ENCODE measurements at regions of chr13 and their contacts with region 1.

Region 1: GRCh38 chr13:102596147-102597028 is at the start of gene TPP2:
- DNase-seq: peak; percentile 97 to 98 (median 97)
- H3K4me3 ChIP-seq: peak within 1 kb of the TSS; percentile 78 to 96
- H3K4me3 Mint-ChIP-seq: peak within 1 kb of the TSS; percentile 97 to 99 (median 98)
- H3K27ac ChIP-seq: peak within 1 kb of the TSS; percentile 93
- H3K27ac Mint-ChIP-seq: peak within 1 kb of the TSS; percentile 99 to 100 (median 100)
- H3K4me1 ChIP-seq: peaks cover 65% of the 10 kb centered on the region
- H3K4me1 Mint-ChIP-seq: peaks cover 53 to 83% (median 64%) of the 10 kb centered on the region in 4 donors
- H3K27me3 ChIP-seq: no peaks in the 10 kb centered on the region
- H3K27me3 Mint-ChIP-seq: no peaks in the 10 kb centered on the region
- total RNA-seq, gene TPP2: 117 TPM

Region 2: GRCh38 chr13:102495663-102496062 is 100.7 kb before region 1 on chr13:
- CTCF ChIA-PET with region 1: no interaction called
- POLR2A ChIA-PET with region 1: no interaction called
- intact Hi-C with region 1: no loop called
- DNase-seq: no peak
- H3K4me3 ChIP-seq: no peak overlapping the region
- H3K4me3 Mint-ChIP-seq: no peak overlapping the region
- H3K27ac ChIP-seq: no peak overlapping the region
- H3K27ac Mint-ChIP-seq: no peak overlapping the region
- H3K4me1 ChIP-seq: no peaks in the 10 kb centered on the region
- H3K4me1 Mint-ChIP-seq: no peaks in the 10 kb centered on the region
- H3K27me3 ChIP-seq: no peaks in the 10 kb centered on the region
- H3K27me3 Mint-ChIP-seq: peaks cover 5 to 11% of the 10 kb centered on the region in 2 donors

Region 3: DNA sequence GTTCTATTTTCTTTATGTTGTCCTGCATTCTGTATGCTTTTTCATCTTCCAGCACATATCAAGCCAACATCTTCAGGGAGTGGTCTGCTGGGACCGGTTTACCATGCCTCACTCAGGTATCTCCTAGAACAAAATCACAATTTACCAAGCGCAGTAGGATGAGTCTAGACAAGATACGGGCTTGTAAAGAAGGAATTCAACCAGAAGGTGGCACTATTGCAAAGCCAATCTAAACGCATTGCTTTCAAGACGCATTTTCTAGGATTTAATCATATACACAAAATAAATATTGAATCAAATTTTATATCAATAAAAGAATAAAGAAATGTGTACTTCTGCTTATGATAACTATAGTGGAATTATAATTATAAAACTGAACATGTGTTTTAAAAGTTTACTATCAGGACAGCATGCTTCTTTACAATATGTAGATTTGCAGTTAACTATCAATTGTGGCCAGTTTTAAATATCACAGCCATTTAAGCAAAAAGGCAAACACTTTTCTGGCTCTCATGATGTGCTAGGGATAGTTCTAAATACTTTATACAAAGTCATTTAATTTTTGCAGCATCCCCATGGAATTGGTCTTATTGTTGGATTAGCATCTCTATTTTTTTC is 15.7 kb before region 1 on chr13:
- CTCF ChIA-PET with region 1: interaction called, 62 read pairs
- POLR2A ChIA-PET with region 1: interaction called, 12 read pairs
- intact Hi-C with region 1: loop called (anchors 2 kb)
- DNase-seq: peak; percentile 57 to 67 (median 63)
- H3K4me3 ChIP-seq: no peak overlapping the region
- H3K4me3 Mint-ChIP-seq: no peak overlapping the region
- H3K27ac ChIP-seq: no peak overlapping the region
- H3K27ac Mint-ChIP-seq: peak overlapping the region in 1 of 7 donors; percentile 58
- H3K4me1 ChIP-seq: peaks cover 9% of the 10 kb centered on the region
- H3K4me1 Mint-ChIP-seq: peaks cover 5 to 14% (median 8%) of the 10 kb centered on the region in 4 donors
- H3K27me3 ChIP-seq: no peaks in the 10 kb centered on the region
- H3K27me3 Mint-ChIP-seq: peaks cover 6 to 8% of the 10 kb centered on the region in 2 donors

Region 4: GRCh38 chr13:102620516-102620915 is 24.1 kb after region 1 on chr13:
- CTCF ChIA-PET with region 1: interaction called, 10 read pairs
- POLR2A ChIA-PET with region 1: interaction called, 12 read pairs
- intact Hi-C with region 1: loop called (anchors 5 kb)
- DNase-seq: no peak
- H3K4me3 ChIP-seq: no peak overlapping the region
- H3K4me3 Mint-ChIP-seq: no peak overlapping the region
- H3K27ac ChIP-seq: no peak overlapping the region
- H3K27ac Mint-ChIP-seq: peak overlapping the region in 1 of 7 donors; percentile 80
- H3K4me1 ChIP-seq: no peaks in the 10 kb centered on the region
- H3K4me1 Mint-ChIP-seq: peaks cover 0 to 14% (median 5%) of the 10 kb centered on the region in 4 donors
- H3K27me3 ChIP-seq: no peaks in the 10 kb centered on the region
- H3K27me3 Mint-ChIP-seq: no peaks in the 10 kb centered on the region

Region 5: GRCh38 chr13:102642475-102642874 is 46.1 kb after region 1 on chr13:
- CTCF ChIA-PET with region 1: interaction called, 21 read pairs
- POLR2A ChIA-PET with region 1: interaction called, 18 read pairs
- intact Hi-C with region 1: no loop called
- DNase-seq: no peak
- H3K4me3 ChIP-seq: no peak overlapping the region
- H3K4me3 Mint-ChIP-seq: no peak overlapping the region
- H3K27ac ChIP-seq: no peak overlapping the region
- H3K27ac Mint-ChIP-seq: peak overlapping the region in 1 of 7 donors; percentile 29
- H3K4me1 ChIP-seq: no peaks in the 10 kb centered on the region
- H3K4me1 Mint-ChIP-seq: peaks cover 0 to 2% (median 0%) of the 10 kb centered on the region in 4 donors
- H3K27me3 ChIP-seq: no peaks in the 10 kb centered on the region
- H3K27me3 Mint-ChIP-seq: no peaks in the 10 kb centered on the region

Region 6: GRCh38 chr13:102657630-102658029 is 61.2 kb after region 1 on chr13:
- CTCF ChIA-PET with region 1: interaction called, 11 read pairs
- POLR2A ChIA-PET with region 1: interaction called, 8 read pairs
- intact Hi-C with region 1: no loop called
- DNase-seq: peak in 1 of 5 donors; percentile 11
- H3K4me3 ChIP-seq: no peak overlapping the region
- H3K4me3 Mint-ChIP-seq: no peak overlapping the region
- H3K27ac ChIP-seq: no peak overlapping the region
- H3K27ac Mint-ChIP-seq: no peak overlapping the region
- H3K4me1 ChIP-seq: no peaks in the 10 kb centered on the region
- H3K4me1 Mint-ChIP-seq: peaks cover 0 to 2% (median 0%) of the 10 kb centered on the region in 4 donors
- H3K27me3 ChIP-seq: no peaks in the 10 kb centered on the region
- H3K27me3 Mint-ChIP-seq: no peaks in the 10 kb centered on the region

Region 7: DNA sequence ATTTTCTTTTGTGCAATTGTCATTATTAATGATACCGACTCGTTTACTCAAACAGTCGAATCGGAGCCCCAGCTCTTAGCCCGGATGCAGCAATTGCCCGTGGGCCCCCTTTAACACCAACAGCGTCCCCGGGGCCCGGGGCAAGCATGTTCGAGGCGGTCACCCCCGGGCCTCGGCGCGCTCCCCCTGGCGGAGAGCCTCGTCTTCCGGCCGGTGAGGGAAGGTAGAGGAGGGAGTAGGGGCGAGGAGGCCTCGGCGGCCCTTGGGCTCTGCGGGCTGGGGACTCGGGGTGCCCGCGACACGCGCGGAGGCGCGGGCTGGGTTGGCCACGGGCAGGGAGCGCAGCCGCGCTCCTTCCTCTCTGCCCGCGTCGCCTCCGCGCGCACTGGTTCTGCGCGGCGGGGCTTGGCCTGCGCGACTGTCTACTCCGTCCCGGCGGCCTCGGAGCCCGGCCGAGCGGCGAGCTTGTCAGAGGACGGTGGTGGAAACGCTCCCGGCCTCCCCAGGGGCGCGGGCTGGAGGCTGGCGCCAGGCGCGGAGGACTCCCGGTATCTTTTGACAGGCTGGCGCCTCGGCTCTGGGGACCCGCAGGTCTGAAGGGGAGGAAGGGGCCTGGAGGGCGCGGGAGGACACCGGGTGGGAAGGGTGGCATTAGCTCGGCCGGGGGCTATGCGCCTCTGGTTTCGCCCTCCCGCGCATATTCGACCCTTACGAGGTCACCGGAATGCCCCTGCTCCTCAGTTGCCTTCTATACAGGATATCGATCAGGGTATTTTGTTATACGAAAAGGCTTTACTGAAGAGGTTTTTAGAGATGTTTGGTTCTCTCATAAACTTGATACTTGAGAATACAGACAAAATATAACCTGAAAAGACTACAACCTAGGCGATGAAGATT is 204.0 kb after region 1 on chr13:
- CTCF ChIA-PET with region 1: interaction called, 51 read pairs
- POLR2A ChIA-PET with region 1: interaction called, 30 read pairs
- intact Hi-C with region 1: loop called (anchors 1 kb)
- DNase-seq: peak; percentile 75 to 83 (median 81)
- H3K4me3 ChIP-seq: peak overlapping the region; percentile 69 to 76
- H3K4me3 Mint-ChIP-seq: peak overlapping the region; percentile 87 to 95 (median 90)
- H3K27ac ChIP-seq: peak overlapping the region; percentile 46
- H3K27ac Mint-ChIP-seq: peak overlapping the region in 6 of 7 donors; percentile 43 to 86 (median 69)
- H3K4me1 ChIP-seq: peaks cover 18% of the 10 kb centered on the region
- H3K4me1 Mint-ChIP-seq: peaks cover 18 to 32% (median 21%) of the 10 kb centered on the region in 4 donors
- H3K27me3 ChIP-seq: no peaks in the 10 kb centered on the region
- H3K27me3 Mint-ChIP-seq: peaks cover 1 to 6% of the 10 kb centered on the region in 2 donors